CD14-positive monocyte (primary cell): ENCODE measurements at regions of chr5 and their contacts with region 1.

Region 1: DNA sequence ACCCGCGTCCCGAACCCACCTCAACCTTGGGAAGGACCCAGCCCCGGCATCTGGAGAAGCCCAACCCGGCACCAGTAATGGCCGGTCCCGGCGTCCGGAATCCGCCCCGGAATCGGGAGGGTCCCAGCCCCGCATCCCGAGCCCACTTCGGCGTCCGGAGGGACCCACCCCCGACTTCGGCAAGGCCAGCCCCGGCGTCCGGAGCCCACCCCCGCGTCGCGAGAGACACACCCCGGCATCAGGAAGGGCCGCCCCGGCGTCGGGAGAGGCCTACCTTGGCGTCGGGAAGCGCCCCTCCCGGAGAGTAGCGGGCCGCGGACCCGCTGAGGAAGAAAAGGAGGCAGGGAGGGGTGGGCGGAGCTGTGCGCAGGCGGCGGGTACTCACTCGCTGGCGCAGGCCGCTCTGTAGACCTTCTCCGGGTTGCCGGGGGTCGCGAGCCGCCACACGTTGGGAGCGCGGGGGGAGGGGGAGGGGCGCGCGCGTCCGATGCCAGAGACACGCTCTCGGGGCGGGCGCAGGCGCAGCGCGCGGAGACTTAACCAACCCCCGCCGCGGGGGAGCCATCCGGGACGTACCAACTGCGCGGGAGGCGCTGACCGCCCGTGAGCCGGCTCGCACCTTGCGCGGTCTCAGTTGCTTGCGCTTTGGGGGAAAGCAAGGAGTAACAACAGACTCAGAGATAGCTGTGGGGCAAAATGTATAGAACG is at the start of gene UIMC1:
- DNase-seq: peak; percentile 83 to 90 (median 90)
- H3K4me3 ChIP-seq: peak within 1 kb of the TSS; percentile 78 to 90 (median 90)
- H3K4me3 Mint-ChIP-seq: peak within 1 kb of the TSS; percentile 91 to 95
- H3K27ac ChIP-seq: peak within 1 kb of the TSS; percentile 93 to 96
- H3K27ac Mint-ChIP-seq: peak within 1 kb of the TSS; percentile 97 to 99 (median 99)
- H3K4me1 ChIP-seq: peaks cover 23 to 30% of the 10 kb centered on the region in 2 donors
- H3K4me1 Mint-ChIP-seq: peaks cover 20% of the 10 kb centered on the region
- H3K27me3 ChIP-seq: no peaks in the 10 kb centered on the region
- H3K27me3 Mint-ChIP-seq: peaks cover 0 to 4% (median 3%) of the 10 kb centered on the region in 3 donors
- CTCF ChIP-seq: no peak
- polyA plus RNA-seq, gene UIMC1: 14.8 to 35.6 (median 19.1) TPM

Region 2: GRCh38 chr5:176965633-176966032 is 40.8 kb before region 1 on chr5:
- intact Hi-C with region 1: loop called in 1 of 2 experiments (anchors 5 kb)
- DNase-seq: no peak
- H3K4me3 ChIP-seq: no peak overlapping the region
- H3K4me3 Mint-ChIP-seq: no peak overlapping the region
- H3K27ac ChIP-seq: no peak overlapping the region
- H3K27ac Mint-ChIP-seq: no peak overlapping the region
- H3K4me1 ChIP-seq: no peaks in the 10 kb centered on the region
- H3K4me1 Mint-ChIP-seq: no peaks in the 10 kb centered on the region
- H3K27me3 ChIP-seq: no peaks in the 10 kb centered on the region
- H3K27me3 Mint-ChIP-seq: no peaks in the 10 kb centered on the region
- CTCF ChIP-seq: no peak